ENCODE measurements at regions of chr1 and their contacts with region 1.

Region 1: DNA sequence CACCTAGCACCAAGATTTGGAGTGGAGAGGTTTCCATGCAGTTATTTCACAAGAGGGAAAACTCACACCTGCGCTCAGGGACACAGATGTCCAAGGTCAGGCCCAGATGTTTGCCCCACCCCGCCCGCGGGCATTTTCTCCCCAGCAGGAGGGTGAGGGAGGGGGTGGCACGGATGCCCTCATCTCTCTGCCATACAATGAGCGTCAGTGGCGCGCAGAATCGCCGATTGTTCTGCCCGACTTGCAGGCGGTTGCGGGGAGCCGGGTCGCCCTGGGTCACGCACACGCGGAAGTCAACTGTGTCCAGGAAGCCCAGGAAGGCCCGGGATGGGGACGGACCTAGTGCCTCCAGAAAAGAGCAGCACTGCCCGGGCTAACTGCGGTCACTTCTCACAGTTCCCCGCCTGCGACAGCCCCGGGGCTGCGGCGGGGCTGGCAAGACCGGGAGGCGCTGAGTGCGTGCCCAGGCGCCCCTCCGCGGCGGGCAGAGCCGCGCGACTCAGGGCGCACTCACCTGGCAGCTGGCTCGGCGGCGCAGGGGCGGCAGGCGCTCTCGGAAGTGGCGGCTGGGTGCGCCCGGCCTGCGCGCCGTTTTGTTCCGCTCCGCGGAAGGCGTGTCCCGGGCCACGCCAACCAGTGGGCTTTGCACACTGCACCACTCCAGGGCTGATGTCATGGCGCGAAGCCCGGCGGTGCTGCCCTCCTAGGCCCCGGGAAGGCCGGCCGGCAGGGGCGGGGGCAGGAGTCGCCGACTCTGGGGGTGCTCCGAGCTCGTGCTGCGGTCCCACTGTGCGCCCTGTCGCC is at the start of gene CSRP1:
- DNase-seq: peak; percentile 49
- ATAC-seq: peak; percentile 19
- H3K4me3 Mint-ChIP-seq: peak within 1 kb of the TSS; percentile 67
- H3K27ac Mint-ChIP-seq: no peak within 1 kb of the TSS
- H3K4me1 Mint-ChIP-seq: peaks cover 49% of the 10 kb centered on the region
- H3K27me3 Mint-ChIP-seq: peaks cover 39% of the 10 kb centered on the region
- CTCF ChIP-seq: no peak
- total RNA-seq, gene CSRP1: 10.7 to 15.4 TPM (median 14.3 TPM) in 3 replicates

Region 2: GRCh38 chr1:201391651-201392511 is 114.9 kb before region 1 on chr1:
- CTCF ChIA-PET with region 1: no interaction called
- POLR2A ChIA-PET with region 1: no interaction called
- DNase-seq: no peak
- ATAC-seq: no peak
- H3K4me3 Mint-ChIP-seq: no peak overlapping the region
- H3K27ac Mint-ChIP-seq: peak overlapping the region; percentile 67; the same call in 1 of the 2 replicates
- H3K4me1 Mint-ChIP-seq: peaks cover 16% of the 10 kb centered on the region
- H3K27me3 Mint-ChIP-seq: no peaks in the 10 kb centered on the region; the same call in 1 of the 2 replicates
- CTCF ChIP-seq: no peak

Region 3: GRCh38 chr1:201495471-201496295 is 11.1 kb before region 1 on chr1:
- CTCF ChIA-PET with region 1: interaction called, 276 read pairs
- POLR2A ChIA-PET with region 1: interaction called, 4 read pairs
- DNase-seq: no peak
- ATAC-seq: no peak
- H3K4me3 Mint-ChIP-seq: no peak overlapping the region
- H3K27ac Mint-ChIP-seq: no peak overlapping the region; the same call in 1 of the 2 replicates
- H3K4me1 Mint-ChIP-seq: peaks cover 19% of the 10 kb centered on the region
- H3K27me3 Mint-ChIP-seq: no peaks in the 10 kb centered on the region
- CTCF ChIP-seq: no peak

Measured in WTC11 (cell line).